Activated naive CD4-positive, alpha-beta T cell treated with anti-CD3 and anti-CD28 coated beads for 36 hours (primary cell): ENCODE measurements at regions of chr19 and their contacts with region 1.

Region 1: GRCh38 chr19:49570138-49570856 is 10.1 kb downstream of the NOSIP start:
- DNase-seq: peak; percentile 88
- H3K4me3 Mint-ChIP-seq: no peak overlapping the region
- H3K27ac Mint-ChIP-seq: peak overlapping the region; percentile 0
- H3K4me1 Mint-ChIP-seq: peaks cover 53% of the 10 kb centered on the region
- H3K27me3 Mint-ChIP-seq: no peaks in the 10 kb centered on the region

Region 2: GRCh38 chr19:49331616-49332055 is 238.7 kb before region 1 on chr19:
- CTCF ChIA-PET with region 1: no interaction called
- intact Hi-C with region 1: no loop called
- DNase-seq: peak; percentile 84
- H3K4me3 Mint-ChIP-seq: peak overlapping the region; percentile 44
- H3K27ac Mint-ChIP-seq: peak overlapping the region; percentile 81
- H3K4me1 Mint-ChIP-seq: peaks cover 74% of the 10 kb centered on the region
- H3K27me3 Mint-ChIP-seq: no peaks in the 10 kb centered on the region

Region 3: DNA sequence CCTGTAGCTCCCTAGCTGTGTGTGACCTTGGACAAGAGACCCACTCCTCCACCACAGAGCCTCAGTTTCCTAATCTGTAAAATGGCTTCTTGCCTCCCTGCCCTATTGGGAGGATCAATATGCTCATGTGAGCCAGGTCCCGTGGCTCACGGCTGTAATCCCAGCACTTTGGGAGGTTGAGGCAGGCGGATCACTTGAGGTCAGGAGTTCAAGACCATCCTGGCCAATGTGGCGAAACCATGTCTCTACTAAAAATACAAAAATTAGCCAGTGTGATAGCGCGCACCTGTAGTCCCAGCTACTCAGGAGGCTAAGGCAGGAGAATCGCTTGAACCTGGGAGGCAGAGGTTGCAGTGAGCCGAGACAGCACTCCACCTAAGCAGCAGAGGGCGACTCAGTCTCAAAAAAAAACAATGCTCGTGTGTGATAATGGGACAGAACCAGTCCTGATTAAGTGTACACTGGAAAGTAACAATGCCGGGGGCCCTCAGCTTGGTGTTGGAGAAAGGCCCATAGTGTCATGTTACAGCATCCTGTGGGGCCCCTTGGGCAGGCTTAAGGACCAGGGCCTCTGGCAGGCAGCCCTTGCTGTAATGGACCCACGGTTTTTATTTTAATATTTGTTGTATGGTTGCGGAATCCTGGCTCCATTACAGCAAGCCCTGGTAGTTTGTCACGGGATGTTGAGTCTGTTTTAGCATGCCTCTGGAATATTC is 67.3 kb before region 1 on chr19:
- CTCF ChIA-PET with region 1: interaction called, 17 read pairs
- intact Hi-C with region 1: loop called (anchors 1 kb)
- DNase-seq: peak; percentile 63
- H3K4me3 Mint-ChIP-seq: no peak overlapping the region
- H3K27ac Mint-ChIP-seq: no peak overlapping the region
- H3K4me1 Mint-ChIP-seq: peaks cover 47% of the 10 kb centered on the region
- H3K27me3 Mint-ChIP-seq: no peaks in the 10 kb centered on the region

Region 4: GRCh38 chr19:49512970-49513745 is 57.1 kb before region 1 on chr19:
- CTCF ChIA-PET with region 1: interaction called, 25 read pairs
- intact Hi-C with region 1: no loop called
- DNase-seq: peak; percentile 42
- H3K4me3 Mint-ChIP-seq: peak overlapping the region; percentile 70
- H3K27ac Mint-ChIP-seq: no peak overlapping the region
- H3K4me1 Mint-ChIP-seq: peaks cover 27% of the 10 kb centered on the region
- H3K27me3 Mint-ChIP-seq: no peaks in the 10 kb centered on the region

Region 5: DNA sequence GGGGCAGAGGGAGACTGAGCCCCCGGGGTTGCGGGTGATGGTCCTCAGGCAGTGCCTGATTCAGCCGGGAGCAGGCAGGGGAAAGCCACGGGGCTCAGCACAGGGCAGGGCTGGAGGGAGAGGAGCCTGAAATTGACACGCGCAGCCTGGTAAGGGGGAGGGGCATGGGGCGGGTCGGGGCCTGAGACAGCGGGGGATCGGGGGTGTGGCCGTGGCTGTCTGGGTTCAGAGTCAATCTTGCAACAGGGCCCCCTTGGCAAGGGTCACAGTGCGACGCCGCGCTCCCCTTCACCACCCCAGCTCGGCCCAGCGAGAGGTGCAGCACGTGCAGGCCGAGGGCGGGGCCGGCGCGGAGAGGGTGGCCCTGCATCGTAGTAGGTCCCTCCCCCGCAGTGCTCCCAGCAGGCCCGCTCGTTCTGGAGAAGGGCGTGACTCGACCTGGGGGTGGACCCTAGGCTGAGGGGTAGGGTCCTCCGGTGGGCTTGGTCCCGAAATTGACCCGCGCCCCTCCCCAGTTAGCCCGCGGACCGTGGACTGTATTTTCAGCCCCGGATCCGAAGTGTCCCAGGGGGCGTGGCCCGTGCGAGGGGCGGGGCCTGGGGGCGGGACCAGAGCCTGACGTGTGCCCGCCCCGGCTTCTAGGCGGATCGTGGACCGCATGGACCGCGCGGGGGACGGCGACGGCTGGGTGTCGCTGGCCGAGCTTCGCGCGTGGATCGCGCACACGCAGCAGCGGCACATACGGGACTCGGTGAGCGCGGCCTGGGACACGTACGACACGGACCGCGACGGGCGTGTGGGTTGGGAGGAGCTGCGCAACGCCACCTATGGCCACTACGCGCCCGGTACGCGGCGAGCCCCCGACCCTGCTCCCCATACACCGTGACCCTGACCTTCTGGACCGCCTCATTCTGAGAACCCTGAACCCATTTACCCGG is 36.5 kb before region 1 on chr19:
- CTCF ChIA-PET with region 1: interaction called, 9 read pairs
- intact Hi-C with region 1: loop called (anchors 5 kb)
- DNase-seq: peak; percentile 82
- H3K4me3 Mint-ChIP-seq: peak overlapping the region; percentile 83
- H3K27ac Mint-ChIP-seq: no peak overlapping the region
- H3K4me1 Mint-ChIP-seq: peaks cover 21% of the 10 kb centered on the region
- H3K27me3 Mint-ChIP-seq: no peaks in the 10 kb centered on the region

Region 6: DNA sequence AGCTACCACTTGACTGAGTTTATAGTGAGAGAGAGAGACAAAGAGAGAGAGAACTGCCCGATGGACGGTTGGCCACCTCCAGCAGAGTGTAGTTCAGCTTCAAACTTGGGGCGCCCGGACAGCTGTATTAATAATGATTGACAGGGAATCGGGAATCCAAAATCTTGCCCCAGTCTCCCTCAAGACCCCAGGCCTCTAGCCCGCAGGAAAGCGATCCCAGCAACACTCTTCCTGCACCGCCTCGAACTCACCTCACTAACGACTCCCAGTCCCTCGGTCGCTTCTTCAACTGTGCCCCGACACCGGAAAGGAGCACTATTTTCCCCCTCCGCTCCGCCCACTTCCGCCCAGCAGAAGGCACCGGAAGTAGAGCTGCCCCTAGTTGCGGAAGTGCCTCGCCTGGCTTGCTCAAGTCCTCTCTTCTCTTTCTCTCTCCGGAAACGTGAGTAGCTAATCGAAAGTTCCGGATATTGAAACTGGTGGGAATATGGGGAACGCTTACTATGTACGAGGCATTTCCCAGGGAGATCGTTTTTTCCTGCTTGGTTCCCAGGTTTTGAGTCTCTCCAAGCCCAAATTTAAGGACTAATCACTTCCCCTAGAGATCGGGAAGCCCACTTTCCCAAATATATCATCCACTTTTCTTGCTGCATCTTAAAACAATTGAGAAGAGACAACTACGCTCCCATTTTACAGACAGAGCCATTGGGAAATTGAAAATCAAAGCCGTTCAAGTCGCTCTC is 10.1 kb after region 1 on chr19 and contains the start of gene NOSIP:
- CTCF ChIA-PET with region 1: interaction called, 30 read pairs
- intact Hi-C with region 1: no loop called
- DNase-seq: peak; percentile 98
- H3K4me3 Mint-ChIP-seq: peak within 1 kb of the TSS; percentile 85
- H3K27ac Mint-ChIP-seq: peak within 1 kb of the TSS; percentile 82
- H3K4me1 Mint-ChIP-seq: peaks cover 36% of the 10 kb centered on the region
- H3K27me3 Mint-ChIP-seq: no peaks in the 10 kb centered on the region
- total RNA-seq, gene NOSIP: 76.4 to 77.4 TPM